MCF 10A (cell line): ENCODE measurements at regions of chr9 and their contacts with region 1.

Region 1: DNA sequence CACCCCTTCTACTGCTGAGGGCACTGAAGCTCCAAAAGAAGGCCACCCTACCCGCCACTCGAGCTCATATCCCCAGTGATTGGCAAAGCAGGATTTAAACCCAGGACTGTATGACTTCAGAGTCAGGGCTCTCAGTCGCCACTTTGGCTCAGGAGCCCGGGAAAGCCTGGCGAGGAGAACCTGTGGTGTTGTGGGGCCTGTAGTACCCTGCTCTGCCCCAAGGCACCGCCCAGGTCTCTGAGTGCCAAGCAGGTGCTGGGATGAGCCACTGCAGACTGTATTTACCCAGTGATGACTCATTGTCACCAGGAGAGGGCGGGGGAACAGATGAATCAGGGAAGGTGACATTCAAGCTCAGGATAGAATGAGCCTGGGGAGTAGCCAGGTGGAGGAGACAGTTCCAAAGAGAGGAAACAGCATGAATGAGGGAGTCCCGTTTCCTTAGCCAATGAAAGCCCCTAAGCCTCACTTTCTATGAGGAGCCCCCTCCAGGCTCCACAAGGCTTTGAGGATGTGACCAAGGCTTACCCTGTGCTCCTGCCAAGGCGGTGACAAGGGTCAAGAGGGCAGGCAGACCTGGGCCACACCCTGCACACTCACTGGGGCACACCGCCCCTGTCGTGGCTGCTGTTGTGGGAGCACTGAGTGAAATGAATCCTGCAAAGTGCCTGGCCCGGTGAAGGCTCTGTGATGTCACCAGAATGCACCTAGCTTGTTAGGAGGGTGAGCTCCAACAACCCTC is 17.8 kb upstream of the DPM2 start:
- DNase-seq: peak; percentile 81
- H3K4me3 Mint-ChIP-seq: peak overlapping the region; percentile 29
- H3K27ac Mint-ChIP-seq: no peak overlapping the region
- H3K4me1 Mint-ChIP-seq: peaks cover 24% of the 10 kb centered on the region
- H3K27me3 Mint-ChIP-seq: no peaks in the 10 kb centered on the region
- CTCF ChIP-seq: peak; percentile 36

Region 2: DNA sequence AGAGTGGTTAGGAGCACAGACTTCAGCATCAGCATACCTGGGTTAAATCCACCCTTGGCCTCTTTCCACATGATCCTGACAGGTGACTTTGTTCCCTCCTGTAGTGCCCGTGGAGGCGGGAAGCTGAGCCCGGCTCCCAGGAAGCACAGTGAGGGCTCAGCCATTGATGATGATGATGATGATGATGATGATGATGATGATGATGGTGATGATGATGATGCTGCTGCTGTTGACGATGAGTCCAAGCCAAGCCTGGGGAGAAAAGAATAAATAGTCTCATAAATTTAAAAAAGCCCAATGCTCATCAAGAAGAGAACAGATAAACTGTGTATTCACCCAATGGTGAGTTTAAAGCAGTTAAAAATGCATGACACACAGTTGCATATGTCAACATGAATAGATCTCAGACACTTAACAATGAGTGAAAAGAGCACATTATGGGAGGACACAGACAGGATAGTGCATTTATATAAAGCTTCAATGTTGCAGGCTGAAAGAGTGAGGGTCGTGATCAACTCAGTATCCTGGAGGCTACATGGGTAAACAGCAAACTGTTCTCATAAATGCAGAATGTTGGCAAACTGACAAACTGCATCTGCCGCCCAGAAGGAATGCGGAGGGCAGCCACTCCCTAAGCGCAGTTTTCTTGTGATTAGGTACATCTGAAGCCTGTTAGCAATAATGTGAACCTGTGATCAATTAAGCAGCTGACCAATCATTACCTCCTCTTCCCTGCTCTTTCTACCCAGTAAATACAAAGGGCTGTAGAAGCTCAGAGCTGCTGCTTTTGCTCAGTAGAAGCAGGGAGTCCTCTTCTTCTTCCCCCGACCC is 260.4 kb before region 1 on chr9:
- CTCF ChIA-PET with region 1: no interaction called
- POLR2A ChIA-PET with region 1: no interaction called
- intact Hi-C with region 1: no loop called
- DNase-seq: no peak
- H3K4me3 Mint-ChIP-seq: no peak overlapping the region
- H3K27ac Mint-ChIP-seq: no peak overlapping the region
- H3K4me1 Mint-ChIP-seq: peaks cover 7% of the 10 kb centered on the region
- H3K27me3 Mint-ChIP-seq: no peaks in the 10 kb centered on the region
- CTCF ChIP-seq: no peak

Region 3: DNA sequence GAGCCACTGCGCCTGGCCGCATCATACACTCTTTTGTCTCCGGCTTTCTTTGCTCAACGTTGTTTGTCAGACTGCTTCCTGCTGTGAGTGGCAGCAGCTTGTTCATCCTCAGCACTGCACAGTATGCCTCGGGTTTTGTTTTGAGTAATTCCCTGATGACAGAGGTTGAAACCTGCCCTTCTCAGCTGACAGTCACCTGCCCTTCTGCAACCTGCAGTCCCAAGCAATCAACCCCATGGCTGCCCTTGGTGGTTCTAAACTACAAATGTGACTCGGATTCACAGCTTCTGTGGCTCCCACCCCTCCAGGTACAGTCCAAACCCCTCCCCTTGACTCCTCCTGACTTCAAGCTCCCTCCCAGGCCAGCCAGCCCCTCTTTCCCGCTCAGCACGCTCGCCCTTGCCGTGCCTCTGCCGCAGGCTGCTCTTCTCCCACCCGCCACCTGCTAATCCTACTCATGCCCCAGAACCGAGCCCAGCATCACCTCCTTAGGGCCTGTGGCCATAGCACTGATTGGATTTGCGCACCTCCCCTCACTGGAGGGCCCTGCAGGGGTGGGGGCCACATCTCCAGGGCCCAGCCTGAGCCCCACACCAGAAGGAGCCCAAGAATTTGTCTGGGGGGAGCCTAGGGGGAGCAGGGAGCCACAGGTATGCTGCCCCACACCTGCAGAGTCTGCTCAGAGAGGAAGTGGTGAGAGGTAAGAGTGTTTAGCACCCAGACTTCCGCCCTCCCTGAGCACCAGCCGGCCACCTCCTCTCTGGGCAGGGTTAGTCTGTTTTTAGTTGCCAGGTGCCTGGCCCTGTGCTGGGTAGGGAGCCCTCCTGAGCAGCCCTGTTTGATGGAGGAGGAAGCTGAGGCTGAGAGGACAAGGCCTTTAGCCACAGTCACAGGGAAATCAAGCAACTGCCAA is 15.2 kb after region 1 on chr9:
- CTCF ChIA-PET with region 1: interaction called, 4 read pairs
- POLR2A ChIA-PET with region 1: interaction called, 16 read pairs
- intact Hi-C with region 1: no loop called
- DNase-seq: no peak
- H3K4me3 Mint-ChIP-seq: no peak overlapping the region
- H3K27ac Mint-ChIP-seq: peak overlapping the region; percentile 98
- H3K4me1 Mint-ChIP-seq: peaks cover 58% of the 10 kb centered on the region
- H3K27me3 Mint-ChIP-seq: no peaks in the 10 kb centered on the region
- CTCF ChIP-seq: no peak